ENCODE measurements at regions of chr2 and their contacts with region 1.

Region 1: GRCh38 chr2:54558188-54559005 is 102.3 kb downstream of the SPTBN1 start:
- DNase-seq: peak; percentile 69
- H3K4me3 Mint-ChIP-seq: peak overlapping the region; percentile 90
- H3K27ac Mint-ChIP-seq: peak overlapping the region; percentile 73
- H3K4me1 Mint-ChIP-seq: peaks cover 51% of the 10 kb centered on the region
- H3K27me3 Mint-ChIP-seq: no peaks in the 10 kb centered on the region

Region 2: GRCh38 chr2:54531558-54531957 is 26.8 kb before region 1 on chr2:
- intact Hi-C with region 1: loop called (anchors 2 kb)
- DNase-seq: no peak
- H3K4me3 Mint-ChIP-seq: no peak overlapping the region
- H3K27ac Mint-ChIP-seq: no peak overlapping the region
- H3K4me1 Mint-ChIP-seq: peaks cover 36% of the 10 kb centered on the region
- H3K27me3 Mint-ChIP-seq: peaks cover 7% of the 10 kb centered on the region

Region 3: GRCh38 chr2:54597153-54597848 is 38.9 kb after region 1 on chr2:
- intact Hi-C with region 1: loop called (anchors 2 kb)
- DNase-seq: no peak
- H3K4me3 Mint-ChIP-seq: peak overlapping the region; percentile 64
- H3K27ac Mint-ChIP-seq: peak overlapping the region; percentile 94
- H3K4me1 Mint-ChIP-seq: peaks cover 88% of the 10 kb centered on the region
- H3K27me3 Mint-ChIP-seq: no peaks in the 10 kb centered on the region

Region 4: DNA sequence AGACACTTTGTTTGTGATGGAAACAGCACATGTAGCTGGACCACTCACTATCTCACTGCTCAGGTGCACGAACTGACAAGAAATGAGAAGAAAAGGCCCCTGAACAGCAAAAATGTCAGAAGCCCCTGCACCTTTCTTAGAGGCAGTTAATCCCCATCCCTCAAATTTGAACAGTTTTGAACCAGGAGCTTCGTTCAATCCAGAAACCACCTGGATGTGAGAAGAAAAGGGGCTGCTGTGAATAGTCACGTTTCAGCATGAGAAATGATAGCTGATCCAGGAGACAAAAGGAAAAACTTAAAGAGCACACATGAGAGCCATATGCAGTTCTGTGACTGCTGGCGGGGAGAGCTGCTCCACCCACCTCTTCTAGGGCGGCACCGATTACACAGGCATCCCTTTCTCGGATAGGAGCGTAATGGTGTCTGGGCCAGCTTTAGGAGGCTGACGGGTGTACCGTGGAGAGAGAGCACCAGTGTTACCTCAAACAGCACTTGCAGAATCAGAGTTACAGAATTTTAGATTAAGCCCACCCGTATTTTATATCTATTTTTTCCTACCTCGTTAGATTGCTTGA is 48.1 kb after region 1 on chr2:
- intact Hi-C with region 1: loop called (anchors 1 kb)
- DNase-seq: no peak
- H3K4me3 Mint-ChIP-seq: peak overlapping the region; percentile 31
- H3K27ac Mint-ChIP-seq: peak overlapping the region; percentile 81
- H3K4me1 Mint-ChIP-seq: peaks cover 76% of the 10 kb centered on the region
- H3K27me3 Mint-ChIP-seq: no peaks in the 10 kb centered on the region

Region 5: DNA sequence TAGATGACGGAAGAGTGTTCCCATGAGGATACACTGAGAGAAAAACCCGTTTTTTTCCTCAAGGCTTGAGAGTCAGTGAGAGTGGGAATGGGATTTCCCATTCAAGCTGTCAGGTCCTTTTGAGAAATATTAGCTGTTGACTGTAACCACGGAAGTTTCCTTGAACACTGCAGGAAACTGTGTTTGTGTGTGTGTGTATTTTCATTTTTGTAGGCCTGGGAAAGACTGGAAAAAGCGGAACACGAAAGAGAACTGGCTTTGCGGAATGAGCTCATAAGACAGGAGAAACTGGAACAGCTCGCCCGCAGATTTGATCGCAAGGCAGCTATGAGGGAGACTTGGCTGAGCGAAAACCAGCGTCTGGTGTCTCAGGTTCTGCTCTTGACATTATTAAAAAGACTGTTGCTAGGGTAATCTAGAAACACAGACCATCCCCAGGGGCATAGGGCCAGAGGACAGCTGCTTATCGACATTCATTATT is 66.2 kb after region 1 on chr2:
- intact Hi-C with region 1: no loop called
- DNase-seq: no peak
- H3K4me3 Mint-ChIP-seq: no peak overlapping the region
- H3K27ac Mint-ChIP-seq: no peak overlapping the region
- H3K4me1 Mint-ChIP-seq: peaks cover 6% of the 10 kb centered on the region
- H3K27me3 Mint-ChIP-seq: no peaks in the 10 kb centered on the region

Region 6: GRCh38 chr2:55050133-55050994 is 492.0 kb after region 1 on chr2 and contains the start of gene RTN4:
- intact Hi-C with region 1: loop called (anchors 2 kb)
- DNase-seq: peak; percentile 99
- H3K4me3 Mint-ChIP-seq: peak within 1 kb of the TSS; percentile 99
- H3K27ac Mint-ChIP-seq: peak within 1 kb of the TSS; percentile 99
- H3K4me1 Mint-ChIP-seq: peaks cover 61% of the 10 kb centered on the region
- H3K27me3 Mint-ChIP-seq: no peaks in the 10 kb centered on the region
- total RNA-seq, gene RTN4: 91.2 and 93.3 TPM in 2 replicates